Aorta (tissue), 5 donors: ENCODE measurements at regions of chr1 and their contacts with region 1.

Region 1: DNA sequence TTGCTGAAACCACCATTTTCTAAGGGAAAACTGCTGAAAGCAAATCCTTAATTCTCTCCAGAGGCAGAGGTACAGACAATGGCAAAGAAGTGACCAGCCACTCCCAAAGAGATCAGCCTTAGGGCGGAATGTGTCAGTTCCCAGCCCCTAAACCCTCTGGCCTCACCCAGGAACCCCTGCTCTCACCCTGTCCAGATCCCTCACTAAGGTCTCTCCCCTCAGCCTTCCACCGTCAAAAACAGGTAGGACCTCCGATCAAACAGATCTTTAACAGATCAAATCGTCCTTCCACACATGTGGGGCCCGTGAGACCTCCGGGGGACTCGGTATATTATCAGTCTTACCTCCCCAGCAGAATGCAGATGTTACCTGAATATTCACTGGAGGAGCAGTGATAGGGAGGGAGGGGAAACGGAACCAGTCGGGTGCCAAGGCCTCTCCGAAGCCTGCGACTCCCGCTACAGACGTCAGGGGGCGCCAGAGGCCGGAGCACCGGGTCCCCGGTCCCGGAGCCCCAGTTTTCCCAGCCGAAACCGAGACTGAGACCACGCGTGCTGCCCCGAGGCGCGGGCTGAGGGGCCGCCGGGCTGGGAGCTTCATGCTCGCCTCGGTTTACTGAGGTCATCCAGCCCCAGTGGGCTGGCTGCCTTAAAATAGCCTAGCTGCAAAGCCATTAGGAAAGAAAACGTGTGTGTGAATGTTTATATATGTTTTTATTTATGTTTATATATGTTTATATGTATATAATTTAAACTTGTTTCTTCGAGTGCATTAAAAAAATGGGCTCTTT is 23.6 kb downstream of the GPA33 start:
- DNase-seq: peak; percentile 73 to 94
- ATAC-seq: peak; percentile 87
- H3K4me3 ChIP-seq: no peak overlapping the region
- H3K27ac ChIP-seq: no peak overlapping the region
- H3K4me1 ChIP-seq: no peaks in the 10 kb centered on the region
- H3K27me3 ChIP-seq: no peaks in the 10 kb centered on the region

Region 2: DNA sequence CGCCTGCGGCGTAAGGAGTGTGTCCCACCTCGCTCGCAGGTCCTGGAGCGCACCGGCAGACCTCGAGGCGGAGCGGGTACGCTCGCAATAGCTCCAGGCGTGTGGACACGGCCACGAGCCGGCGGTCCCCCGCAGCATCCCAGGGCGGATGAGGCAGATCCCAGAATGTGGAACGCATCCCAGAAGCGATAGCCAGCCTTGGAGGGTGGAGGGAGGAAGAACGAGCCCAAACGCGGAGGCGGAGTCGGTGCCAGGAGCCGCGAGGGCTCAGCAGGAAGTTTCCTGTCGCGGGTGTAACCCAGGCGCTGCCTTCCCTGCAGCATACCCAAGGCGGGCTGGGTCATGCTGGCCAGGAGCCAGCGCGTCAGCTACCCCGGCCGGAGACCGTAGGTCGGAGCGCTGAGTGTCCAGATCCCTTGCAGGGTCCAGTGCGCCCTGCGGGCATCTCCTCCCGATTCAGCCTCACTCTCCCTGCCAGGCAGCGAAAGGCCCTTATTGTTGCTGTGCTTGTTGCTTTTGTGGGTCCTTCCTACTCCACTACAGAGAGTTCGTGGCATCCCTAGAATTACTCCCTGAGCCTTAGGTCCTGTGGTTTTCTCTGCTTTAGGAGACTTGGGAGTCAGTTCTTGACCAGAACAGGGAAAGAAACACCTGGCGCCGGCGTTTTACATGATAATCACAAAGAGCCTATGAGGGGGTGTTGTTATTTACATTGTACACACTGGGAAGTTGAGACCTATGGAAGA is 55.0 kb after region 1 on chr1:
- intact Hi-C with region 1: loop called (anchors 2 to 5 kb)
- DNase-seq: peak; percentile 62 to 81
- ATAC-seq: peak; percentile 74
- H3K4me3 ChIP-seq: no peak overlapping the region
- H3K27ac ChIP-seq: no peak overlapping the region
- H3K4me1 ChIP-seq: no peaks in the 10 kb centered on the region
- H3K27me3 ChIP-seq: no peaks in the 10 kb centered on the region

Region 3: DNA sequence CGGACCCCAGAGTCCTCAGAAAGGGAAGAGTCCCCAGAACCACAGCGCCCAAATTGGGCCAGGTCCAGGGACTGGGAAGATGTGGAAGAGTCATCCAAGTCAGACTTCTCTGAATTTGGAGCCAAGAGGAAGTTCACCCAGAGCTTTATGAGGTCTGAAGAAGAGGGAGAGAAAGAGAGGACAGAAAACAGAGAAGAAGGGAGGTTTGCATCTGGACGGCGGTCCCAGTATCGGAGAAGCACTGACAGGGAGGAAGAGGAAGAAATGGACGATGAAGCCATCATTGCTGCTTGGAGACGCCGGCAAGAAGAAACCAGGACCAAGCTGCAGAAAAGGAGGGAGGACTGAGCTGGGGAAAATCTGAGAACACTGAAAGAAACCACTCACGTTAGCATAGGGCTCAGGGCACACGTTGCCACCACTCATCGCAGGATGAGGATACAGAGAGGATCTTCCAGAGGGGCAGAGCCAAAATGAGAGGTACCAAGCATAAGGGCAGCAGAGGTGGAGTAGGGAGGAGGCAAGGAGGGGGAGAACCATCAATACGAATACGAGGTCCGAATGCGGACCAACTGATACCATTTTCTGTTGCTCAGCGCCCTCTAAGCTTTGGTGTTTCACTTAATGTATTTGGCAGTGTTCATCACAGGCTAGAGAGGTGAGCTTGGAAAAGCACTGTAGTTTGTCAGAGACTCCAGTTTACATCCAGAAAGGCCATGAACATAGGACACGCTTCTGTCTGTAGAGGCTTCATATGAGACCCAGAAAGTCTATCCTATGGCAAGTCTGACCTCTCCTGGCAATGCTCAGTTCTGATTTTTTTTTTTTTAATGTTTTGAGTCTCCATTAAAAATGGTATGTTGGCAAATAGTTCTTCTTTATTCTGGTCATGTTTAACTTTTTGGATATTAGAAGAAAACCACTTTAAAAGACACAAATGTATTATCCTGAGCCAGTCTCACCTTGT is 62.0 kb after region 1 on chr1:
- intact Hi-C with region 1: loop called (anchors 2 to 5 kb)
- DNase-seq: no peak
- ATAC-seq: no peak
- H3K4me3 ChIP-seq: no peak overlapping the region
- H3K27ac ChIP-seq: no peak overlapping the region
- H3K4me1 ChIP-seq: no peaks in the 10 kb centered on the region
- H3K27me3 ChIP-seq: no peaks in the 10 kb centered on the region

Region 4: DNA sequence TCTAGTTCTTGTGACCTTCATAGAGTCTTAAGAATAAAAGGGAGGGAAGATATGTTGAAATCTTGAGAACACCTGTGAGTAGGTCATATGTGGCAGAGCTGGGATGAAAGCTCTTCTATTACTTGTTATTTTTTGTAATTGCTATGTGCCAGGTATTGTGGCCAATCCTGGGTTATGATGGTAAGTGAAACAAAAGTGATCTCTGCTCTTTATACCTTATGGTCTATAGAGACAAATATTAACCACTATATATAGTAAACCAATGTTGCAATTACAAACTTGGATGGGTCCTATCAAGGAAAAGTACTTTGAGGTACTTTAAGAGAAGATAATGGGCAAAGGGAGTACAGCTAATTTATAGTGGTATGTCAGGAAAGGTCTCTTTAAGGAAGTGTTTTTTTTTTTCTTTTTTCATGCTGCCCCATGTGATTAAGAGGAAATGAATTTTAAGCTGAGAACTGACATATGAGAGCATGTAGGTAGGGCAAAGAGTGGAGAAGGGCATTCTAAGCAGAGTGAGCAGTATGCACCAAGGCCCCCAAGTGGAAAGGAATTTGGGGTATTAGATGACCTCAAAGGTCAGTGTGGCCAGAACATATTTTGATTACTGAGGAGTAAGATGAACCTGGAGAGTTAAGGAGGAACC is 197.4 kb after region 1 on chr1:
- intact Hi-C with region 1: loop called in 1 of 2 experiments (anchors 5 kb)
- DNase-seq: no peak
- ATAC-seq: no peak
- H3K4me3 ChIP-seq: no peak overlapping the region
- H3K27ac ChIP-seq: no peak overlapping the region
- H3K4me1 ChIP-seq: peaks cover 3 to 5% of the 10 kb centered on the region in 2 donors
- H3K27me3 ChIP-seq: no peaks in the 10 kb centered on the region

Region 5: GRCh38 chr1:167442124-167442848 is 375.8 kb after region 1 on chr1:
- intact Hi-C with region 1: loop called (anchors 1 kb)
- DNase-seq: peak; percentile 89 to 94
- ATAC-seq: peak; percentile 84
- H3K4me3 ChIP-seq: no peak overlapping the region
- H3K27ac ChIP-seq: no peak overlapping the region
- H3K4me1 ChIP-seq: no peaks in the 10 kb centered on the region
- H3K27me3 ChIP-seq: no peaks in the 10 kb centered on the region

Region 6: DNA sequence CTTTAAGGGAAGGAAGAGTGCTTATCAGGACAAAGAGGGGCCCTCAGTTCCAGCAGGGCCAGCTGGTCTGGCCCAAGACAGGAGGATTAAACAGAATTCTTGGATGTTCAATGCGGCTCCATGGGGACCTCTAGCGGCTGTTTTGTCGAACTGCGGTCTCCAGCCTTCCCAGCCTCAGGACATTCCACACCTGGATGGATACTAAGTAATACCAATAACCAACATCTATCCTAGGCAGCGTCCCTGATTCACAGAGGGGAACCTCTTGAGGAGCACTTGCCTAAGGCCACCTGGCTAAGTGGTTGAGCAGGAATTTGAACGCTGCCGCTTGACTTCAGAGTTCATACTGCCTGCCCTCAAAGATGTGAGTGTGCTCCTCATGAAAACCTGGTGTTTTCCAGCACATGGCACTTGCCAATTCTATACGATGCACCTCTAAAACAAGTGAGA is 467.3 kb after region 1 on chr1:
- intact Hi-C with region 1: loop called (anchors 2 to 5 kb)
- DNase-seq: peak; percentile 67 to 81
- ATAC-seq: peak; percentile 90
- H3K4me3 ChIP-seq: no peak overlapping the region
- H3K27ac ChIP-seq: no peak overlapping the region
- H3K4me1 ChIP-seq: no peaks in the 10 kb centered on the region
- H3K27me3 ChIP-seq: no peaks in the 10 kb centered on the region

Region 7: DNA sequence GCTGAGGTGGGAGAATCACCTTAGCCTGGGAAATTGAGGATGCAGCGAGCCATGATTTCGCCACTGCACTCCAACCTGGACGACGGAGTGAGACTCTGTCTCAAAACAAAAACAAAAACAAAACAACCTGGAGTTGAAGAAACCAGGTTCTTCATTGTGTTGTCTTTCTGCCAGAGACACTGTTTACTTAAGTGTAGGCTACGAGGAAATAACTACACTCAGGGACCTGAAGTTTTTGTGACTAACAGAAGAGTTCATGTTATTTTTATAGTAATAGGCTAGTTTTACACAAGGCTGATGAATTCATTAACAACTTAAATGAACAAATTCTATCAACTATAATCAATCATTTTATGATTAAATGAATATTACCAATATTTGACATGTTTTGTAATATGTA is 968.8 kb after region 1 on chr1:
- intact Hi-C with region 1: no loop called
- DNase-seq: no peak
- ATAC-seq: no peak
- H3K4me3 ChIP-seq: no peak overlapping the region
- H3K27ac ChIP-seq: no peak overlapping the region
- H3K4me1 ChIP-seq: no peaks in the 10 kb centered on the region
- H3K27me3 ChIP-seq: no peaks in the 10 kb centered on the region